OCI-LY7 (cell line): ENCODE measurements at regions of chr10 and their contacts with region 1.

Region 1: DNA sequence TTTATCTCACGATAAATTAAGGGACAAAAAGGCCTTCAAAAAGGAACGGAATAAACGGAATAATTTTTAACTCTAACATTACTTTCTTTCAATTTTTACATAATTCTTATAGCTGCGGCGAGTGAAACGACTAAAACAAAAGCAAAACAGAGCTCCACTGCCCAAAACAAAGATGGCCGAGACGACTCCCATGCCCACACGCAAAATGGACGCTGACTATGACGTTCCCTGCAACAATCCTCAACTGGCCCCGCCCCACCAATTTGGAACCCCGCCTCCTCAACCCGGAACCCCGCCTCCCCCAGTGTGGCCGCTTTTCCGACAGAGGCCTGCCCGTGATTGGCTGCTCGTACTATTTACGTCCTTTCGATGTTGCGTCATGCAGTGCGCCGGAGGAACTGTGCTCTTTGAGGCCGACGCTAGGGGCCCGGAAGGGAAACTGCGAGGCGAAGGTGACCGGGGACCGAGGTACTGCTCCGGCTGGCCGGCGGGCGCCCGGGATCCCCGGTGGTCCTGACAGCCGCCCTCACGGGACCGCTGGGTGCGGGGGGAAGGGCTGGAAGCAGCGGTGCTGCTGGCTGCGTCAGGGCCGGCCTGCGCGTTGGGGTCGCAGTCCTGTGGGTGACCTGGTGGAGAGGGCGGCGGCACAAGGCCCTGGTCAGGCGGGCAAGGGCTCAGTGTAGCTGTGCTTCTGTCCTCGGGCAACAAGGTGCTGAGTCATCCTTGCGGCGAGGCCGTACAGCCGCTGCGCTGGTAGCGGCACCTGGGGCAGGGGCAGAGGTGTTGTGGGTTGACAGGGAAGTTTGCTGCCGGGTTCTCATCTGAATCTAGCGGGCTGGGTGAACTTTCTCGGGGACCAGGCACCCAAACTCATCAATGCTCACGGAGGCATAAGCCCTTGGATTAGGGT is at the start of gene GHITM:
- DNase-seq: peak; percentile 98
- H3K4me3 ChIP-seq: peak within 1 kb of the TSS; percentile 98
- H3K27ac ChIP-seq: peak within 1 kb of the TSS; percentile 44
- H3K4me1 ChIP-seq: peaks cover 20% of the 10 kb centered on the region
- CTCF ChIP-seq: no peak
- total RNA-seq, gene GHITM: 103 and 119 TPM in 2 replicates

Region 2: DNA sequence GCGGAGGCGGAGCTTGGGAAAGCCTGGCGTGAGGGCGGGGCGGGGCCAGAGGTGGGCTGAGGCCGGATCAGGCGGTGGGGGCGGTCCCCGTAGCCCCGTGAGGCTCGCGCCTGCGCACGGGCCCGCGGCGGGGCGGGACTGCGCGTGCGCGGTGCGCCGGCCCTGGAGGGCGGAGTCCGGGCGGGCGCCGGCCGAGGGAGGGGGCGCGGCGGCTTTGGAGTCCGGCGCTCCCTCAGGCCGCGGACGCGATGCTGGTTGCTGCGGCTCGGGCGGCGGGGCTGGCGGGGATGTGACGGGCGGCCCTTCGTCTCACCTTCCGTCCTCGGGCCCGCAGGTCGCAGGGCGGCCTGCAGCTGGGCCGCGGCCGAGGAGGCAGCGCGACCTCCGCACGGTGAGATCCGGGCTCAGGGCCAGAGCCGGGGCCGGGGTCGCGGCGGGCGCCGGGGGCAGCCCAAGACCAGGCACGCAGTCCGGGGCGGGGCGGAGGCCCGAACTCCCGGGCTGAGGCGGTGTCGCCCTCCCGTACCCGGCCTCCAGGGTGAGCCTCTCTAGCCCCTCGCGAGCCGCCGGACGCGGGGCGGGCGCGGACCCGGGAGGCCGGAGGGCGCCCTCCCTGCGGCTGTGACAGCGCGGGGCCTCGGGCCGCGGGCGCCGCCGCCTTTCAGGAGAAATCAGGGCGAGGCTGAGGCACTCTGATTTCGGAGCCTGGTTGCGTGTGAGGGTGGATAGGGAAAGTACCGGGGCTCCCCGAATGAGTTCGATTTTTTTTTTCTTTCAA is 189.2 kb after region 1 on chr10 and contains the start of gene CCSER2:
- CTCF ChIA-PET with region 1: no interaction called
- POLR2A ChIA-PET with region 1: no interaction called
- intact Hi-C with region 1: loop called (anchors 2 kb)
- DNase-seq: peak; percentile 91
- H3K4me3 ChIP-seq: peak within 1 kb of the TSS; percentile 86
- H3K27ac ChIP-seq: peak within 1 kb of the TSS; percentile 73
- H3K4me1 ChIP-seq: peaks cover 30% of the 10 kb centered on the region
- CTCF ChIP-seq: peak; percentile 52
- total RNA-seq, gene CCSER2: 11.1 and 15.9 TPM in 2 replicates

Region 3: DNA sequence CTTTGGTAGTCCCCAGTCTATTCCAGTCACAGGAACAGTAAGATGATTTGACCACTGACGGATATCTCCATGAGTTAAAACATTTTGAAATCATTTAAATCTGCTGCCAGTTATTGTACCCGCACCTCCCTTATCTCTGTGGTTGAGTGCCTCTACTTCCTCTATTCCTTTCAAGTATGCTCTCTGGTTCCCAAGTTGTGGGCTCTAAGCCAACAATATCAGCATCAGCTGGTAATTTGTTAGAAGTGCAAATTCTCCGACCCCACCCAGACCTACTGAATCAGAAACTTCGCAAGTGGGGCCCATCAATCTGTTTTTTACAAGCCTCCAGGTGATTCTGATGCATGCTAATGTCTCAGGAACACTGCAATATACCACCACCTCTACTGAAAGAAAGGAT is 424.5 kb after region 1 on chr10:
- CTCF ChIA-PET with region 1: no interaction called
- POLR2A ChIA-PET with region 1: no interaction called
- intact Hi-C with region 1: no loop called
- DNase-seq: no peak
- H3K4me3 ChIP-seq: no peak overlapping the region
- H3K27ac ChIP-seq: no peak overlapping the region
- H3K4me1 ChIP-seq: peaks cover 3% of the 10 kb centered on the region
- CTCF ChIP-seq: no peak